K562 (cell line): ENCODE measurements at regions of chr9 and their contacts with region 1.

Region 1: GRCh38 chr9:121992571-121993212 is 100.4 kb downstream of the TTLL11 start:
- DNase-seq: peak; percentile 68 to 79 (median 74)
- ATAC-seq: peak; percentile 93
- H3K4me3 ChIP-seq: no peak overlapping the region
- H3K27ac ChIP-seq: no peak overlapping the region
- H3K4me1 ChIP-seq: no peaks in the 10 kb centered on the region
- H3K27me3 ChIP-seq: peaks cover 1 to 27% of the 10 kb centered on the region in 2 experiments; a peak in 4 of 5 replicates
- CTCF ChIP-seq: peak; percentile 70 to 76 (median 73)
- EP300 ChIP-seq: no peak
- POLR2A ChIP-seq: no peak
- RAD21 ChIP-seq: peak; percentile 74 to 80

Region 2: GRCh38 chr9:121545875-121546423 is 446.7 kb before region 1 on chr9:
- CTCF ChIA-PET with region 1: interaction called, 4 read pairs
- POLR2A ChIA-PET with region 1: no interaction called
- in situ Hi-C with region 1: no loop called
- intact Hi-C with region 1: loop called (anchors 2 kb)
- DNase-seq: peak; percentile 93 to 95 (median 94)
- ATAC-seq: peak; percentile 99
- H3K4me3 ChIP-seq: no peak overlapping the region
- H3K27ac ChIP-seq: no peak overlapping the region
- H3K4me1 ChIP-seq: peaks cover 0 to 18% of the 10 kb centered on the region in 2 experiments; a peak in 2 of 5 replicates
- H3K27me3 ChIP-seq: peaks cover 0 to 20% of the 10 kb centered on the region in 2 experiments; a peak in 2 of 5 replicates
- CTCF ChIP-seq: peak; percentile 91 to 95 (median 95)
- EP300 ChIP-seq: no peak
- POLR2A ChIP-seq: no peak
- RAD21 ChIP-seq: peak; percentile 88 to 90

Region 3: GRCh38 chr9:121621113-121621449 is 371.6 kb before region 1 on chr9:
- CTCF ChIA-PET with region 1: no interaction called
- POLR2A ChIA-PET with region 1: no interaction called
- in situ Hi-C with region 1: no loop called
- intact Hi-C with region 1: loop called (anchors 5 kb)
- DNase-seq: peak; percentile 50 to 67 (median 56)
- ATAC-seq: peak; percentile 96
- H3K4me3 ChIP-seq: no peak overlapping the region
- H3K27ac ChIP-seq: no peak overlapping the region
- H3K4me1 ChIP-seq: no peaks in the 10 kb centered on the region
- H3K27me3 ChIP-seq: peaks cover 3 to 34% of the 10 kb centered on the region in 2 experiments; a peak in 3 of 5 replicates
- CTCF ChIP-seq: peak; percentile 69 to 80 (median 76)
- EP300 ChIP-seq: no peak
- POLR2A ChIP-seq: no peak
- RAD21 ChIP-seq: peak; percentile 12 to 59; a peak in 2 of 4 replicates

Region 4: DNA sequence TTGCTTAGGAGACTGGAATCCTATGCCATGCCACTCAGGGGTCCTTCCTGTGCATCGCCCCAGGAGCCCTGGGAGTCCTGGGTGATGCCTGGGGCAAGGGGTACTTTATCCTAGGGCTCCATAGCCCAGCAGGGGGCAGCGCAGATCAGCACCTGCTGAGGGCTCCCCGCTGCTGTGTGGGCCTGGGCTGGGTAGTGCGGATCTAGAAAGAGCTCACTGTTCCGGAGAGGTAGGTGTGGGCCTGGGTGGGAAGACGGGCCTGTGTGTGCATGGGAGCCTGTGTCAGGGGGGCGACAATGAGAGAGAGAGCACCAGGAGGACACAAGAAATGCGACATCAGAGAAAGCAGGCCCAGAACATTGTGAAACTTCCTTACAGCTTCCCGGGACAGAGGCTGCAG is 352.6 kb before region 1 on chr9:
- CTCF ChIA-PET with region 1: interaction called, 3 read pairs
- POLR2A ChIA-PET with region 1: no interaction called
- in situ Hi-C with region 1: no loop called
- intact Hi-C with region 1: loop called (anchors 2 kb)
- DNase-seq: peak; percentile 55 to 71 (median 70)
- ATAC-seq: peak; percentile 96
- H3K4me3 ChIP-seq: no peak overlapping the region
- H3K27ac ChIP-seq: no peak overlapping the region
- H3K4me1 ChIP-seq: no peaks in the 10 kb centered on the region
- H3K27me3 ChIP-seq: peaks cover 0 to 24% of the 10 kb centered on the region in 2 experiments; a peak in 3 of 5 replicates
- CTCF ChIP-seq: peak; percentile 65 to 69 (median 65)
- EP300 ChIP-seq: no peak
- POLR2A ChIP-seq: no peak
- RAD21 ChIP-seq: peak; percentile 44 to 73

Region 5: DNA sequence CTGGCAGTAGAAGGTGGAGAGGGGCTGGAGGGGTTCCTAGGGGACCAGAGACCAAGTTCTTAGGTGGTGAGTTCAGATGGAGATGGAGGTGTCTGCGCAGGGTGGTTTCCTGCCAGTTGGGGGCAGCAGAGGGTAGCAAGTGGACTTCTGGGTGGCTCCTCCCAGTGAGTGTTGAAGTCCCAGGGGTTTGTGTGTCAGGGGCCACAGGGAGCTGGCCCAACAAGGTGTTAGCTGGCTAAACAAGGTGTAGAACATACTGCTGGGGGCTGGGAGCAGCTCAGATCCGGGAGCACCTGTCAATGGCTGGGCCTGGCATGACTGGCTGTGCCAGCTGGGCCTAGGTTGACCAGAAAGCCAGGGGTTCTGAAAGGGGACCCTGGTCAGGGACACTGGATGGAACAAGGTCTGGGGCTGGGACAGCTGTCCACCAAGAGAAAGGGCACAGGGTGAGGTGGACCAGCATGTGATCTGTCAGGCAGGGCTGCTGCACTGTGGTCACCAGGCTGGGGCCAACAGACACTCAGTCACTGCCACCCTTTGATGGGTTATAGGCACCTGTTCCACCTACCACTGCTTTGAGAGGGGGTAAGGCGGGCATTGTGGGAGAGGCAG is 305.7 kb before region 1 on chr9:
- CTCF ChIA-PET with region 1: interaction called, 11 read pairs
- POLR2A ChIA-PET with region 1: no interaction called
- in situ Hi-C with region 1: no loop called
- intact Hi-C with region 1: loop called (anchors 1 kb)
- DNase-seq: peak; percentile 71 to 80 (median 74)
- ATAC-seq: peak; percentile 90
- H3K4me3 ChIP-seq: no peak overlapping the region
- H3K27ac ChIP-seq: no peak overlapping the region
- H3K4me1 ChIP-seq: no peaks in the 10 kb centered on the region
- H3K27me3 ChIP-seq: peaks cover 0 to 15% of the 10 kb centered on the region in 2 experiments; a peak in 3 of 5 replicates
- CTCF ChIP-seq: peak; percentile 80 to 87 (median 84)
- EP300 ChIP-seq: no peak
- POLR2A ChIP-seq: no peak
- RAD21 ChIP-seq: peak; percentile 51 to 81

Region 6: GRCh38 chr9:121744002-121744686 is 248.5 kb before region 1 on chr9:
- CTCF ChIA-PET with region 1: no interaction called
- POLR2A ChIA-PET with region 1: no interaction called
- in situ Hi-C with region 1: no loop called
- intact Hi-C with region 1: loop called (anchors 1 kb)
- DNase-seq: peak; percentile 51 to 66 (median 54)
- ATAC-seq: peak; percentile 85
- H3K4me3 ChIP-seq: no peak overlapping the region
- H3K27ac ChIP-seq: no peak overlapping the region
- H3K4me1 ChIP-seq: peaks cover 0 to 4% of the 10 kb centered on the region in 2 experiments; a peak in 1 of 5 replicates
- H3K27me3 ChIP-seq: peaks cover 13 to 71% of the 10 kb centered on the region in 2 experiments; a peak in 4 of 5 replicates
- CTCF ChIP-seq: peak; percentile 61 to 76 (median 74)
- EP300 ChIP-seq: no peak
- POLR2A ChIP-seq: no peak
- RAD21 ChIP-seq: peak; percentile 68 to 74

Region 7: GRCh38 chr9:121861501-121862180 is 131.1 kb before region 1 on chr9:
- CTCF ChIA-PET with region 1: no interaction called
- POLR2A ChIA-PET with region 1: interaction called, 3 read pairs
- in situ Hi-C with region 1: no loop called
- intact Hi-C with region 1: loop called (anchors 5 kb)
- DNase-seq: peak; percentile 49 to 61 (median 57)
- ATAC-seq: peak; percentile 99
- H3K4me3 ChIP-seq: no peak overlapping the region
- H3K27ac ChIP-seq: no peak overlapping the region
- H3K4me1 ChIP-seq: no peaks in the 10 kb centered on the region
- H3K27me3 ChIP-seq: peaks cover 3 to 42% of the 10 kb centered on the region in 2 experiments
- CTCF ChIP-seq: peak; percentile 75 to 84 (median 77)
- EP300 ChIP-seq: no peak
- POLR2A ChIP-seq: no peak
- RAD21 ChIP-seq: peak; percentile 44 to 76